Activated B cell treated with CpG ODN at 0.5 μM for 24 hours (primary cell): ENCODE measurements at regions of chr4 and their contacts with region 1.

Region 1: GRCh38 chr4:101347557-101348366 is 436 bp upstream of the PPP3CA start:
- DNase-seq: peak; percentile 98
- ATAC-seq: peak; percentile 82
- H3K4me3 Mint-ChIP-seq: peak overlapping the region; percentile 94
- H3K27ac Mint-ChIP-seq: peak overlapping the region; percentile 95
- H3K4me1 Mint-ChIP-seq: peaks cover 39% of the 10 kb centered on the region
- H3K27me3 Mint-ChIP-seq: no peaks in the 10 kb centered on the region
- CTCF ChIP-seq: no peak

Region 2: DNA sequence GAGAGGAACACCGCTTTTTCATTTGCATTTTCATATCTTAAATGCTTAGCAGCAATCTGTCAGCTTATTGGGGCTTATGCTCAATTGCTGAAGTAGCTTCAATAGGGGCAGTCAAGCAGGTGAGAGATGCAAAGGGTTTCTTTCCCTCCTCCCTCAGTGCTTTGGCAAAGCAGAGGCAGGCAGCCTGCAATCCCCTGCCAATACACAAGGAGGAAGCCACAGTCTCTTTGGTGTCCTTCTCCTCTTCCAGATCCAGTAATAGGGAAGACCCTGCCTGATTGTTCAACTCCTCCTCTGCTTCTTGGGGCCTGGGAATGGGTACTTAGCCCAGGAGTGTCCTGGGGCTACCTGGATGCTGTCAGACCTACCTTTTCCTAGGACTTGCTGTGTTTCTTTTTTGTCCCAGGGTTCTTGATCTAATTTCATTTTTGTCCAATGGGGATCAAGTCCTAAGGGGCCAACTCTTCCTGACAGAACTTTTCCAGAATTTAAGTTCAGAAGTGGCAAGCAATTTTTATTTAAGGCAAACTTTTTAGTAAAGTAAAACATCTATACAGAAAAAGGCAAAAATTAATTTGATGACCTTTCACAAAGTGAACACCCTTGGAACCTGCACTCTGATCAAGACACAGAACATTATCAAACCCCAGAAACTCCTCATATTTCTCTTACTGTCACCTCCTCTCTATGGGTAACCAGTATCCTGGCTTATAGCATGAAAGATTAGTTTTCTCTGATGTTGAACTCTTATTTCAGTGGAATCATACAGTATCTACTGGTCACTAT is 260.8 kb before region 1 on chr4:
- CTCF ChIA-PET with region 1: no interaction called
- POLR2A ChIA-PET with region 1: interaction called, 8 read pairs
- intact Hi-C with region 1: loop called (anchors 2 kb)
- DNase-seq: no peak
- ATAC-seq: no peak
- H3K4me3 Mint-ChIP-seq: no peak overlapping the region
- H3K27ac Mint-ChIP-seq: peak overlapping the region; percentile 76
- H3K4me1 Mint-ChIP-seq: peaks cover 60% of the 10 kb centered on the region
- H3K27me3 Mint-ChIP-seq: no peaks in the 10 kb centered on the region
- CTCF ChIP-seq: no peak

Region 3: DNA sequence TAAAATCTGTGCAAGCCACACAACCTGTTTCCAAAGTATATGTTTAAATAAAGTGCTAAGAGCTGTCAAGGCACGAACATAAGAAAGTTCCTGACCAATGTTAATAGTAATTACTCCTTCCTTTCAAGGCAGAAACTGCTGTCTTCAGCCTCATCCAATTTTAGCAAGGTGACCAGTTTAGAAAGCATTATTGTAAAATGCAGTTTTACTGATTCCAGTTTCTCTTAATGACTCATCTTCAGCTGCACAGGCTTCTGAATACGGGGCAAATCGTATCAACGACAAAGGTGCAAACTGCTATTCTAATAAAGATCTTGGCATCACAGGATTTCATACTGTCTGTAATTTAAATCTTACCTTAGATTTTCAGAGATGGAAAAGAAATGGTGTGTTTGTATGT is 87.9 kb before region 1 on chr4:
- CTCF ChIA-PET with region 1: no interaction called
- POLR2A ChIA-PET with region 1: no interaction called
- intact Hi-C with region 1: loop called (anchors 2 kb)
- DNase-seq: no peak
- ATAC-seq: peak; percentile 40
- H3K4me3 Mint-ChIP-seq: peak overlapping the region; percentile 39
- H3K27ac Mint-ChIP-seq: peak overlapping the region; percentile 73
- H3K4me1 Mint-ChIP-seq: peaks cover 94% of the 10 kb centered on the region
- H3K27me3 Mint-ChIP-seq: no peaks in the 10 kb centered on the region
- CTCF ChIP-seq: no peak

Region 4: GRCh38 chr4:101556842-101557241 is 209.1 kb after region 1 on chr4:
- CTCF ChIA-PET with region 1: no interaction called
- POLR2A ChIA-PET with region 1: no interaction called
- intact Hi-C with region 1: loop called (anchors 1 kb)
- DNase-seq: no peak
- ATAC-seq: peak; percentile 98
- H3K4me3 Mint-ChIP-seq: peak overlapping the region; percentile 16
- H3K27ac Mint-ChIP-seq: peak overlapping the region; percentile 83
- H3K4me1 Mint-ChIP-seq: peaks cover 12% of the 10 kb centered on the region
- H3K27me3 Mint-ChIP-seq: no peaks in the 10 kb centered on the region
- CTCF ChIP-seq: no peak

Region 5: DNA sequence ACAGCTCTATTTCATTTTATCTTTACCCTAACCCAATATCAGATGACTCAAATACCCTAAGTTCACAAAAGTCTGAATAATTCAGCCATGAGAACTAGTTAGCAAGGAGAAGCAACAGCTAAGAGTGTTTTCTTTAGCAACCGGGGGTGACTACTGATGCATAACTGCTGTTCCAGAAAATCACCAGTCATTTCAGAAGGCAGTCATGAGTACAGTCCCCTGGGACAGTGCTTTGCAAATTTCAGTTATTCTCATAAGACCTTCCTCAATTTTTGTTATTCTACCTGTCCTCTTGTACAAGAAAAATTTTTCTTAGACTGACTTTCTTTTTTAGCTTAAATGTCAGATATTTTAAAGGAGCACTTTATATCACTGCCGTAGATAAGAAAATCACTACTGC is 459.2 kb after region 1 on chr4:
- CTCF ChIA-PET with region 1: no interaction called
- POLR2A ChIA-PET with region 1: interaction called, 22 read pairs
- intact Hi-C with region 1: loop called (anchors 5 kb)
- DNase-seq: no peak
- ATAC-seq: peak; percentile 87
- H3K4me3 Mint-ChIP-seq: peak overlapping the region; percentile 73
- H3K27ac Mint-ChIP-seq: peak overlapping the region; percentile 95
- H3K4me1 Mint-ChIP-seq: peaks cover 83% of the 10 kb centered on the region
- H3K27me3 Mint-ChIP-seq: no peaks in the 10 kb centered on the region
- CTCF ChIP-seq: no peak

Region 6: GRCh38 chr4:102344954-102345794 is 997.4 kb after region 1 on chr4 and contains the start of gene SLC39A8:
- CTCF ChIA-PET with region 1: no interaction called
- POLR2A ChIA-PET with region 1: no interaction called
- intact Hi-C with region 1: loop called (anchors 1 kb)
- DNase-seq: peak; percentile 82
- ATAC-seq: peak; percentile 87
- H3K4me3 Mint-ChIP-seq: peak within 1 kb of the TSS; percentile 89
- H3K27ac Mint-ChIP-seq: peak within 1 kb of the TSS; percentile 93
- H3K4me1 Mint-ChIP-seq: peaks cover 34% of the 10 kb centered on the region
- H3K27me3 Mint-ChIP-seq: no peaks in the 10 kb centered on the region
- CTCF ChIP-seq: no peak
- total RNA-seq, gene SLC39A8: 17.9 and 18.1 TPM in 2 replicates